AG04450 (cell line): ENCODE measurements at regions of chr17 and their contacts with region 1.

Region 1: DNA sequence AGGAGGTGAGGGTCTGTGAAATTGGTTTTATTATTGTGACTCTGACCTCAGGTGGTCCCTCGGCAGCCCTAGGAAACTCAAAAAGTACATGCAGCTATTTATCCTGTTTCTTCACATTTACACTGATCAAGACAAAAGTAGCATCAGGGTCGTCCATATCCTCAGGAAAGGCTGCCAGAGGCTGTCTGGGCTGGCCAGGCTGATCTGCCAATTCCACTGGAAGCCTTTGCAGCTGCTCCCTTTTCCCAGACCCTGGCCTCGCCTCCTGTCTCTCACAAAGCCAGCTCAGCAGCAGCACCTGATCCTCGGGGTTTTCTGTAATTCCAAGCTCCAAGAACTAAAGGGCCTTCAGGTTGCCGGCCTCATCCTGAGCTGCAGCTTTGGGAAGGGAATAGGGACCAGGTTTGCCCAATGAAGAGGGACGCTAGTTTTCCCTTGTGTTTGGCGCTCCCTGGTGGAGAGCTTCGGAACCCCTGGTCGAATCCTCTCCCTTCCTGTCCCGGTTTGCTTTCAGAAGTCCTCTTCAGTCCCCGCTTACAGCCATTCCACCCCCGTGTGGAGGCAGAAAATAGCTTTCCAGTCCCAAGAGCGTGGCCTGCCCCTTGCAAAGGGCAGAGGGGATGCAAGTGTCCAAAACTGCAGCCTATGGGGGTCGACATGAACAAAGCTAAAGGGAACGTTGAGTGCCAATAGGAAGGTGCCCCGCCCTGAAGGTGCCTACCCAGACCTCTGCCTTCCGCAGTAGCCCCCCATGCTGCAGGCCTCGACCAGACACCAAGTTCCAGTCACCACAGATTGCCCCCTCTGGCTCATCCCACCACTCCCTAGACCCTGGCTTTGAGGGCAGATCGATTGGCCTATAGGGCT is 13.4 kb downstream of the MFSD6L start:
- DNase-seq: peak; percentile 29
- H3K4me3 ChIP-seq: no peak overlapping the region
- H3K27ac ChIP-seq: no peak overlapping the region
- H3K27me3 ChIP-seq: peaks cover 8% of the 10 kb centered on the region
- CTCF ChIP-seq: peak; percentile 90

Region 2: DNA sequence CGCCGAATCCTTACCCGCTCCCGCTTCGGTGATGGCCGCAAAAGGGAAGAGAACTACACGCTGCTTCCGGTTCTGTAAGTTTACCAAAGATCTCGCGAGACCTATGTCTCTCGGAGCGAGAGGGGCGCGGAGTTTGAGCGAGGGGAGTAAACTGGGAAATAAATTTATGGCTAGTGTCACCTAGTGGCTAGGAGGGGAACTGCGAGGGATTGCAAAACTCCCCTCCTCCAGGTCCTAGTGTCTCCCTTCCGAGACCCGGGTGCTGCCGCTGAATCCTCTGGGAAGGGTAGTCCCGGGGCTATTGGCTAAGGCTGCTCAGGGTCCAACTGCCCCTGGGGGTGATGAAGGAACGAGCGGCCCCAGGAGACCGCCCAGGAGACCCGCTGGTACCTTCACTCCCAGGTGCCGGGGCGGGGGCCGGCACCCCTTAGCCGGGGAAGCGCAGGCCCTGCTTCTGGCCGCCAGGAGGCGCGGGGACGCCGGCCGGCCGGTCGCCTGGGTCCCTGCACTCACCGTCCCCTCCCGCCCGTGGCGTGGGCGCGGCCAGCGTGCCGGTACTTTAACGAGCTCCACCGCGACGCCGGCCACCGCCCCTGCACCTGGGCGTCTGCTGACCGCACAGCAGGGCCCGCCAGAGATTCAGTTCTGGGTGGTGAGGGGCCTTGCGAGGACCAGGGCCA is 402.5 kb before region 1 on chr17 and contains the start of gene RPL26:
- CTCF ChIA-PET with region 1: interaction called, 12 read pairs
- POLR2A ChIA-PET with region 1: no interaction called
- DNase-seq: peak; percentile 96
- H3K4me3 ChIP-seq: peak within 1 kb of the TSS; percentile 82
- H3K27ac ChIP-seq: peak within 1 kb of the TSS; percentile 97
- H3K27me3 ChIP-seq: no peaks in the 10 kb centered on the region
- CTCF ChIP-seq: peak; percentile 90
- polyA plus RNA-seq, gene RPL26: 3,841 and 4,830 TPM in 2 replicates

Region 3: DNA sequence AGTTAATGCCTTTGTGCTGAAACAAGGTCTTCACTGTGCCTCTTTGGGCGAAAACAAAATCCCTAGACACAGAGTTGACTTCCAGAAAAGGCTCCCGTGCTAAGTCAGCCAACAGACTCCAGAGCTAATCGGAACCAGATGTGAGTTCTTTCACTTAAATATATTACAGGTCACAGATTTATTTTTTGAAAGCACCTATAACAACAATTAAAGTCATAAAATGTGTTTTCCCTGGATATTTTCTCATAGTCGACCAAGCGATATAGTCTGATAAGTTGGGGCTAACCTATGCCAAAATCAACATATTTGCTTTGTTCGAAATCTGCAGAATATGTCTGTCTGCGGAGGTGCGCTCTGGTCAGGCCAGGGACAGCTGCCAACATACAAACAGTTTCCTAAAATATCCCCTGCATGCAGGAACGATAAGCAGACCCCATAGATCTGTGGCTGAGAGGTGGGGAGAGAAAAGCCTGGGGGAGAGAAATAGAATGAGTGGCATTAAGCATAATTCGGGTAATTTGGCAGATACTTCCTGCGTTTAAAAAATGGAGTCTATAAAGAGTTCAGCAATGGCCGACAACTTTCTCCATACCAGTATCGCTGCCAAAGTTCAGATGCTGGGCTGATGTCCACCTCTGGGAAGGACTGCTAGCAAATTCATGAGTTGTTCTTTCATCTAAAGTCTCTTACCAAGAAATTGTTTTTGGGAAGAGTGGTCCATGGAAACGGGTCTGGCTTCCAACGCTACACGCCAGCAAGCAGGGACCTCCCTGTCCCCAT is 104.4 kb before region 1 on chr17:
- CTCF ChIA-PET with region 1: no interaction called
- POLR2A ChIA-PET with region 1: no interaction called
- DNase-seq: no peak
- H3K4me3 ChIP-seq: peak overlapping the region; percentile 14; the same call in 1 of the 2 replicates
- H3K27ac ChIP-seq: peak overlapping the region; percentile 62
- H3K27me3 ChIP-seq: no peaks in the 10 kb centered on the region
- CTCF ChIP-seq: no peak

Region 4: DNA sequence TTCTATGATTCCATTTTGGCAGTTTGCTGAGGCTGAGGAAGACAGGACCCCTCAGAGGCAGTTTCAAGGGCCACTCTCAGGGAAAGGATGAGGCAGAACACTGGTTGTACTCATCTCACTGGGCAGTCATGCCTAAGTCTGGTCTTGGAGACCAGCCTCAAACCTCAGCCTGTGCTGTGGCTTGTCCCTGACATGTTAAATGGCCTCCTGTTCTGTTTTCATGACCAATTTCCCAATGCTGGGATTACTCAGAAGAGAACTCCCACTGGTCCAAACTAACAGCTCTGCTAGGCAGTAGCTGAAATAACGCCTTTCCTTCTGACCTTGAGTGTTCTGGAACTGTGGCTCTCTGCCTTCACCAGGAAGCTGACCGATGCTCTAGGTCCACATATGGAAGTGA is 19.0 kb before region 1 on chr17:
- CTCF ChIA-PET with region 1: interaction called, 12 read pairs
- POLR2A ChIA-PET with region 1: no interaction called
- DNase-seq: no peak
- H3K4me3 ChIP-seq: no peak overlapping the region
- H3K27ac ChIP-seq: no peak overlapping the region
- H3K27me3 ChIP-seq: peaks cover 7% of the 10 kb centered on the region
- CTCF ChIP-seq: no peak